Activated T-helper 1 cell treated with anti-CD3 and anti-CD28 coated beads, Interleukin-12 subunit alpha, Interleukin-12 subunit beta, Interleukin-2, Interleukin-4 antibody, amounts not matched to agents 30 ng/mL and 10 ng/mL and 1 ng/mL, durations not matched to agents 14 hours and 24 hours and 36 hours (primary cell): ENCODE measurements at regions of chr15 and their contacts with region 1.

Region 1: DNA sequence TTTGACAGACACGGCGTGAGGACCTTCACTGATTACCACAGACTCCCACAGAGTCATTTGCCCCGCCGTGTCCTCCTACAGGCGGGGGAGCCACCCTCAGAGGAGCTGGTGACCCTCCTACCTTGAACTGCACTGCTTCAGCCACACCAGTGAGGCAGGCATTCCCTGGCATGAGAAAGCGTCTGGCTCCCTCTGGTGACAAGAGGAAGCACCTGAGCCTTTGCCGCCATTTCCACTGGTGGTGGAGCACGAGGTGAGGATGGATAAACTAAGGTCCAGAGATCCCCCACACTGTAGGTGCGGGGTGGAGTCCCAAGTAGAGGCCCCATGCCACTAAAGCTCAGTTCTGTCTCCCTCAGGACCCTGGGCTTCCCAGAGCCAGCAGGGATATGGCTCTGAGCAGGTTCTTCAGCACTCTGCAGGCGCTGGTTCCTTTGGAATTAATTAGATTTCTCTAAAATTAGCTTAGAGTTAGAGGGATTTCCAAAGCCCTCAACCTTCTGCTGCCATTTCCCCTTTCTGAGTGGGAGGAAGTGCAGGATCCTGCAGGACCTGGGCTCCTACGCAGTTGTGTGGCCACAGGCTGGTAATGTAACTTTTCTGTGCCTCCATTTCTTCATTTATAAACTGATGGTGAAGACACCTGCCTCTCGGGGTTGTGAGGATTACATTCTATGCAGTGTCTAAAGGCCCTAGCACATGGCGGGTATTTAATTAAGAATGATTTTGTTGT is 224.0 kb downstream of the SLCO3A1 start:
- DNase-seq: peak; percentile 41
- H3K4me3 Mint-ChIP-seq: no peak overlapping the region
- H3K27ac Mint-ChIP-seq: no peak overlapping the region
- H3K4me1 Mint-ChIP-seq: peaks cover 27% of the 10 kb centered on the region
- H3K27me3 Mint-ChIP-seq: no peaks in the 10 kb centered on the region

Region 2: DNA sequence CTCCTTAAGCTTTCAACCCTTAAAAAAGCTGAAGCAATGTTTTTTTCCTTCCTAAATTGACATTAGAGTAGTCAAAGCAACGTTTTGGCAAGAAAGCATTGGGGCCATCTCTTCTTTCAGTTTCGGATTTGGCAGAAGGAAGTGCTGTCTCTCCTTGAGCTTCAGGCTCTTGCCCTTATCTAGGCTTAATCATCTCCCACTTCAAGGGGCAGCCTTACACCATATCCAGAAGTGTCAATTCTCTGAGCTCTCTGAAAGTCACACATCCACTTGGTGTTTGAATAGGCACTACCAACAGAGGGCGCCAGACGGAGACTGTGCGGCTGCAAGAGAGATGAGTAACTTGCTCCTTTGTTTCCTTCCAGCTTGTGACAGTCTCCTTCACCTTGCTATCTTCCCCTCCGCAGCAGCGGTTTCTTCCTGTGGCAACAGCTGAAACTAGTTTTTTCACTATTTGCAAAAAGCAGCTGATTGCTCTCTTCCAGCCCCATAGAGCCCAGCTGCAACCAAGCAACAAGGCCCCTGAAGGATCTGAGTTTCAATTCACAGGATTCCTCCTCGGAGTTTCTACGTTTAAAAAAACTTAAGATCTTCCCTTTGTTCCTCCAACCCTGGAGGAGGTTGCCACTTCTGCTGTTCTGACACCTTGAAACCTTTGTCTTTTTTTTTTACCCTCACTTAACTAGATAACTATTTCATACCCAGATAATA is 371.0 kb before region 1 on chr15:
- intact Hi-C with region 1: loop called (anchors 1 kb)
- DNase-seq: peak; percentile 84
- H3K4me3 Mint-ChIP-seq: peak overlapping the region; percentile 9
- H3K27ac Mint-ChIP-seq: peak overlapping the region; percentile 76
- H3K4me1 Mint-ChIP-seq: peaks cover 24% of the 10 kb centered on the region
- H3K27me3 Mint-ChIP-seq: peaks cover 22% of the 10 kb centered on the region

Region 3: GRCh38 chr15:91780387-91780786 is 297.1 kb before region 1 on chr15:
- intact Hi-C with region 1: no loop called
- DNase-seq: no peak
- H3K4me3 Mint-ChIP-seq: no peak overlapping the region
- H3K27ac Mint-ChIP-seq: no peak overlapping the region
- H3K4me1 Mint-ChIP-seq: no peaks in the 10 kb centered on the region
- H3K27me3 Mint-ChIP-seq: peaks cover 10% of the 10 kb centered on the region

Region 4: DNA sequence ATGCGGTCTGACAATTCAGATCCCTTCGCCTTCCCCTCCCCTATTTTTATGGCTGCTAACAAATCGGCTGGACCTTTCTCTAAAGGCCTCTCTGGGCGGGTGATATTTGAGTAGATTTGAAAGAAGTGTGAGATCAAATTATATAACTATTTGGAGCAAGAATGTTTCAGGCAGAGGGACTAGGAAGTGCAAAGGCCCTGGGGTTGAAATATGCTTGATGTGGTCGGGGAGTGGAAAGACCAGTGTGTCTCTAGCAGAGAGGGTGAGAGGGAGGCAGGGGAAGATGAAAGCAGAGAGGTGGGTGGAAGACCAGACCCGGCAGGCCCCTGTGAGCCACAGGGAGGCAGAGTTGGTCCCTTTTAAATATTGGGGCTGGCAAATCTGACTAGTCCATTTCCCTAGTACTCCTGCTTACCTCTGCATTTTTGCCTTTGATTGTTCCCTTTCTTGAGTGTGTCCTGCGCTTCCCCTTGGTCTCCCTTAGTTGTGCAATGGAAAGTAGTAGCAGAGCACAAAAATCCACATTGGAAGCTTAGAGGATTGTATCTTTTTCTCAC is 191.7 kb before region 1 on chr15:
- intact Hi-C with region 1: loop called (anchors 1 kb)
- DNase-seq: no peak
- H3K4me3 Mint-ChIP-seq: no peak overlapping the region
- H3K27ac Mint-ChIP-seq: no peak overlapping the region
- H3K4me1 Mint-ChIP-seq: peaks cover 16% of the 10 kb centered on the region
- H3K27me3 Mint-ChIP-seq: peaks cover 2% of the 10 kb centered on the region